GM10248 (cell line): ENCODE measurements at regions of chr2 and their contacts with region 1.

Region 1: DNA sequence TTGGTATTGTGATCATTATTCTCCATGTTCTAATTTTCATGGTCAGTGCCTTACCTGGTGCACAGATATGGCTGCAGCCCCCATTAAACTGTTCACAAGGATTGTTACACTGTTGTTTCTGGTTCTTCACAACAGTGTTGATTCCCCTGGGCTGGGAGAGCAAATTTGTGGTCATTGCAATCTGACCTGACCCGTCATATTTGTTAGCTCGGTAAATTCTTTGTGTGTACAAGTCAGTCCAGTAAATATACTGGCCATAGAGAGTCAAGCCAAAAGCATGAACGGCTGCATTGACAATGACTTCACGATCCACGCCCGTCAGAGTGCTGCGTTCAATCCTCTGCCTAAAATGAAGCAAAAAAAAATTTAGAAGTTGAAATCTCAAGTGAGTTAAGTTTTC is 134.6 kb downstream of the DHRS9 start:
- DNase-seq: no peak
- CTCF ChIP-seq: no peak

Region 2: GRCh38 chr2:169221745-169222369 is 17.9 kb after region 1 on chr2:
- CTCF ChIA-PET with region 1: interaction called, 10 read pairs
- POLR2A ChIA-PET with region 1: no interaction called
- DNase-seq: no peak
- CTCF ChIP-seq: no peak